Naive thymus-derived CD4-positive, alpha-beta T cell (primary cell): ENCODE measurements at regions of chr1 and their contacts with region 1.

Region 1: DNA sequence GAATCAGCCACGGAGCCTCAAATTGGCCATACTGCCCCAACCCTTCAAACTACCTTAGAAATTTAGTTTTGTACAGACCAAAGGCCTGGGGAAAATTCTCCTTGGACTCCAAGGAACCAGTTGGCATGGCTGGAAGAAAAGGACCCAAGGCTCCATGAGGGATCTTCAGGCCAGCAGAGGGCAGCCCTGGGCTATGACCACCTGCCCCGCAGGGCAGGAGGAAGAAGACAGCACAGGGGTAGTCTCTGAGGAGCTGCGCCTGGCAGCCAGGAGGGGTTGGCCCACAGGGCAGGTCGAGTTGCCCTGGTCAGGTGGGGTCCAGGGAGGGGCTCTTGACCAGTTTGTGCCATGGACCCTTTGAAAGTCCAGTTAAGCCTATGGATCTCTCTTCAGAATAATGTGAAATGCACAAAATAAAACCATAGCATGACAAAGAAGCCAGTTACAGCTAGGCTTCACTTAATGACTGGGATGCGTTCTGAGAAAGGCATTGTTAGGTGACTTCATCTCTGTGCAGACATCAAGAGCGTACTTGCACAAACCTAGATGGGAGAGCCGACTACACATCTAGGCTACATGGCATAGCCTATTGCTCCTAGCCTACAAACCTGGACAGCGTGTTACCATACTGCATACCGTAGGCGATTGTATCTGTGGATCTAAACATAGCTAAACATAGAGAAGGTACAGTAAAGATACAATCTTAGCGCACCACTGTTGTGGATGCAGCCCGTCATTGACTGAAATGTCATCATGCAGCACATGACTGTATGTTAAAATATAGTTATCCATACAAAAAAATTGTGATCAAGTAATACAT is 26.1 kb downstream of the CACNA1S start:
- DNase-seq: peak in 6 of 9 donors; percentile 14 to 38 (median 20)
- ATAC-seq: peak; percentile 68
- H3K4me3 ChIP-seq: no peak overlapping the region
- H3K4me3 Mint-ChIP-seq: no peak overlapping the region
- H3K27ac ChIP-seq: no peak overlapping the region
- H3K27ac Mint-ChIP-seq: peak overlapping the region in 1 of 9 donors; percentile 2
- H3K4me1 ChIP-seq: no peaks in the 10 kb centered on the region
- H3K4me1 Mint-ChIP-seq: peaks cover 0 to 1% (median 0%) of the 10 kb centered on the region in 7 donors
- H3K27me3 ChIP-seq: no peaks in the 10 kb centered on the region
- H3K27me3 Mint-ChIP-seq: peaks cover 0 to 27% (median 7%) of the 10 kb centered on the region in 5 donors

Region 2: GRCh38 chr1:201119206-201120197 is 33.4 kb after region 1 on chr1:
- CTCF ChIA-PET with region 1: interaction called, 6 read pairs
- POLR2A ChIA-PET with region 1: interaction called, 12 read pairs
- intact Hi-C with region 1: loop called (anchors 1 kb)
- DNase-seq: peak in 7 of 9 donors; percentile 20 to 43 (median 27)
- ATAC-seq: peak; percentile 52
- H3K4me3 ChIP-seq: no peak overlapping the region
- H3K4me3 Mint-ChIP-seq: no peak overlapping the region
- H3K27ac ChIP-seq: no peak overlapping the region
- H3K27ac Mint-ChIP-seq: no peak overlapping the region
- H3K4me1 ChIP-seq: peaks cover 0 to 11% of the 10 kb centered on the region in 2 donors
- H3K4me1 Mint-ChIP-seq: peaks cover 1 to 23% (median 18%) of the 10 kb centered on the region in 7 donors
- H3K27me3 ChIP-seq: peaks cover 0 to 4% of the 10 kb centered on the region in 2 donors
- H3K27me3 Mint-ChIP-seq: peaks cover 0 to 44% (median 0%) of the 10 kb centered on the region in 5 donors

Region 3: GRCh38 chr1:201223852-201224665 is 137.9 kb after region 1 on chr1:
- CTCF ChIA-PET with region 1: no interaction called
- POLR2A ChIA-PET with region 1: no interaction called
- intact Hi-C with region 1: loop called in 1 of 2 experiments (anchors 1 kb)
- DNase-seq: no peak
- ATAC-seq: no peak
- H3K4me3 ChIP-seq: no peak overlapping the region
- H3K4me3 Mint-ChIP-seq: no peak overlapping the region
- H3K27ac ChIP-seq: no peak overlapping the region
- H3K27ac Mint-ChIP-seq: no peak overlapping the region
- H3K4me1 ChIP-seq: no peaks in the 10 kb centered on the region
- H3K4me1 Mint-ChIP-seq: peaks cover 0 to 1% (median 0%) of the 10 kb centered on the region in 7 donors
- H3K27me3 ChIP-seq: no peaks in the 10 kb centered on the region
- H3K27me3 Mint-ChIP-seq: peaks cover 0 to 10% (median 4%) of the 10 kb centered on the region in 5 donors

Region 4: DNA sequence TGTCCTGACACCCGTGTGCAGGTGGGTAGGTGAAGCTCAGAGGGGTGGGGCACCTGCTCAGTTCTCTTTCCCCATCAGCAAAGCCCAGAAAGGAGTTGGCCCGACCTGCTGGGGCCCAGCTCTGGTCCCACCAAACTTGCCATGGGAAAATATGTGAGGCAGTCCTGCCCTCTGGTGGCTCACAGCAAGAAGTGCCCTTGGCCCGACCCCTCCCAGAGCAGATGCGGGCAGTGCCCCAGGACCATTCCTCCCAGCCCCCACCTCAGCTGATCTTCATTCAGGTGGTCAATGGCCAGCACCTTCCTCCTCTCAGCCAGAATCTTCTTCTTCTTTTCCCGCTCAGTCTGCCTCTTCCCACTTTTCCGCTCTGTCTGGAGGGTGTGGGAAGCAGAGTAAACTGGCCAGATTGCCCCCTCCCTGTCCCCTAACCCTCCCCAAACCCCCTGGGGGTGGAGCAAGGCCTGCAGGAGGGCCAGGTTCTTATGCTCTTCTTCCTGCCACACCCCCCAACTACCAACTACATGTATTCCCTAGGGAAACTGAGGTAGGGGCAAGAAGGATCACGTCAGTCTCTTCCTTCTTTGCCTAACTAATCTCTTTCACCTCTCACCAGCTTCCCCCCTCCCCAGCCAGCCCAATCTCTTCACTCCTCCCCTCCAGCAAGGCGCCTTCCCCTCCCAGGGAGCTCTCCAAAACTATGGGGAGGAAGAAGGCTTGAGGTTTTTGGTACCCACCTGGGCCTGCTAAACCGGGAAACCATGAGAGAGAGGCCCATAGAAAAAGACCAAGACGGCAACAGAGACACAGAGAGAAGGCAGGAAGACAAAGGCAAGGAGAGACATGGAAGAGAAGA is 275.8 kb after region 1 on chr1:
- CTCF ChIA-PET with region 1: no interaction called
- POLR2A ChIA-PET with region 1: no interaction called
- intact Hi-C with region 1: loop called in 1 of 2 experiments (anchors 5 kb)
- DNase-seq: no peak
- ATAC-seq: peak; percentile 33
- H3K4me3 ChIP-seq: no peak overlapping the region
- H3K4me3 Mint-ChIP-seq: no peak overlapping the region
- H3K27ac ChIP-seq: no peak overlapping the region
- H3K27ac Mint-ChIP-seq: no peak overlapping the region
- H3K4me1 ChIP-seq: no peaks in the 10 kb centered on the region
- H3K4me1 Mint-ChIP-seq: no peaks in the 10 kb centered on the region
- H3K27me3 ChIP-seq: no peaks in the 10 kb centered on the region
- H3K27me3 Mint-ChIP-seq: peaks cover 0 to 27% (median 10%) of the 10 kb centered on the region in 5 donors

Region 5: DNA sequence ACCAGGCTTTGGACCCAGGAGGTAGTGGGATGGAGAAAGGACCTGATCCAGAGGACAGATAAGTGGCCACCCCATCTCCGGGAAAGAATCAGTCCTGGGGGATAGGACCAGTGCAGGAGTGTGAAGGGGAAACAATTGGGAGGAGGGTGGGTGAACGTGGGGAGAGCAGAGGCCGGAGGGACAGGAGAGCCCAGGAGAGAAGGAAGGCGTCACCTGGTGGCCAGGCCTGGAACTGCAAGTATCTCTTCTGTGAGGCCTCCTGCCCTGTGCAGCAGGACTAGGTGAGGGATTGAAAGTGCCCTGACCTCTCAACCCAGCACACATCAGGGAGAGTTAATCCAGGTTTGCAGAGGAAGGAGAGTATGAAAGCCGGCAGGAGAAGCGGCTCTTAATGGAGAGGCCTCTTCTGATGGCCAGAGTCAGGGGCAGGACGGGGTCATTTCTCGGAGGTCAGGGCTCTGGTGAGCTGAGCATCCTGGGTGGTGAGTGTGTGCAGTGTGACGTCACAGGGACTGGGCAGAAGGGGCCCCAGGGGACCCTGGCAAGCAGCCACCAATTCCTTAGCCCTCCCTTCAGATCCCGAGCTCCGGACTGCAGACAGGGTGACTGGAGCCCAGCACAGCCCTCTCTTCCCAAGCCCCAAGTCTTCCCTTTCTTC is 322.2 kb after region 1 on chr1:
- CTCF ChIA-PET with region 1: no interaction called
- POLR2A ChIA-PET with region 1: no interaction called
- intact Hi-C with region 1: loop called in 1 of 2 experiments (anchors 5 kb)
- DNase-seq: peak in 8 of 9 donors; percentile 14 to 76 (median 48)
- ATAC-seq: peak; percentile 65
- H3K4me3 ChIP-seq: no peak overlapping the region
- H3K4me3 Mint-ChIP-seq: no peak overlapping the region
- H3K27ac ChIP-seq: no peak overlapping the region
- H3K27ac Mint-ChIP-seq: no peak overlapping the region
- H3K4me1 ChIP-seq: no peaks in the 10 kb centered on the region
- H3K4me1 Mint-ChIP-seq: no peaks in the 10 kb centered on the region
- H3K27me3 ChIP-seq: no peaks in the 10 kb centered on the region
- H3K27me3 Mint-ChIP-seq: peaks cover 0 to 15% (median 0%) of the 10 kb centered on the region in 5 donors